ENCODE measurements at regions of chr1 and their contacts with region 1.

Region 1: GRCh38 chr1:167721617-167722151 is at the start of gene MPZL1:
- DNase-seq: peak; percentile 91 to 98 (median 94)
- H3K4me3 ChIP-seq: peak within 1 kb of the TSS; percentile 72 to 98 (median 90)
- H3K27ac ChIP-seq: peak within 1 kb of the TSS in 58 of 59 donors; percentile 40 to 94 (median 85)
- H3K27me3 ChIP-seq: peaks cover 0 to 6% (median 0%) of the 10 kb centered on the region in 45 donors
- CTCF ChIP-seq: peak in 24 of 56 donors; percentile 6 to 42 (median 18)
- total RNA-seq, gene MPZL1: 23.8 to 52.3 (median 34.9) TPM

Region 2: GRCh38 chr1:167584581-167584980 is 137.1 kb before region 1 on chr1:
- intact Hi-C with region 1: no loop called
- DNase-seq: no peak
- H3K4me3 ChIP-seq: no peak overlapping the region
- H3K27ac ChIP-seq: no peak overlapping the region
- H3K27me3 ChIP-seq: peaks cover 0 to 4% (median 0%) of the 10 kb centered on the region in 45 donors
- CTCF ChIP-seq: no peak

Region 3: GRCh38 chr1:167763525-167764220 is 42.0 kb after region 1 on chr1:
- intact Hi-C with region 1: loop called (anchors 2 kb)
- DNase-seq: peak in 6 of 10 donors; percentile 15 to 73 (median 48)
- H3K4me3 ChIP-seq: peak overlapping the region in 9 of 59 donors; percentile 1 to 35 (median 9)
- H3K27ac ChIP-seq: peak overlapping the region in 16 of 59 donors; percentile 0 to 63 (median 18)
- H3K27me3 ChIP-seq: peaks cover 0 to under 1% (median 0%) of the 10 kb centered on the region in 45 donors
- CTCF ChIP-seq: peak in 7 of 56 donors; percentile 7 to 29 (median 21)

Region 4: DNA sequence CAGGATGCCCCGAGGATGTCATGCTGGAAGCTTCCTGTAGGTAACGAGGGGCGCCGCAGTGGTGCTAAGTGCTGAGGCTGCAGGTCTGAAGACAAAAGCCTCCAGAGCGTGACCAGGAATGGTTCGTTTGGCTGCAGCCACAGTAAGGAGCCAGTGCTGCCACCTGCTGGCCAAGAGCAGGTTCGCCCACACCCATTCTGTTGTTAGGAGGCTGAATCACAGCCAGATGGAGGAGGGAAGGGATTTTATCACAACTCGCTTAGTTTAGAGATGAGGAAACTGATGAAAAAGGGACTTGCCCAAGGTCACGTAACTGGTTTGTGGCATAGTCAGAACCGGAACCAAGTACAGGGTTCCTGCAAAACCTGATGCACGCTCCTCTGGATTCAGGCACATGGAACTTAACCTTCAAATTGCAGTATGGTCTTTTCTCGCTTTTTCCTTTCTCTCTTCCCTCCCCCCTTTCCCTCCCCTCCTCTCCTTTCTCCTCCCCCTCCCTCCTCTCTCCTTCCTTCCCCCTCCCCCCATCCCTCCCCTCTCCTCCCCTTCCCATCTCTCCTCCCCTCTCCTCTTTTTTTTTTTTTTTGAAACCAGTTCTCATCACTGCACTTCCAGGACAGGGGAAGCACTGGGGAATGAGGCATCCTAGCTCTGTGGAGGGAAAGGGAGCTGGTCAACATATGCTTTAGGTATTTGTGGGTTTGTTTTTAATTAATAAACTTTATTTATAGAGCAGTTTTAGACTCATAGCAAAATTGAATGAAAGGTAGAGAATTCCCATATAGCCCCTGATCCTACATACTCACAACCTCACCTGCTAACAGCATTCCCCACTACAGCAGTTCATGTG is 81.9 kb after region 1 on chr1:
- intact Hi-C with region 1: loop called in 1 of 2 experiments (anchors 1 kb)
- DNase-seq: peak; percentile 77 to 92 (median 88)
- H3K4me3 ChIP-seq: peak overlapping the region in 16 of 59 donors; percentile 0 to 26 (median 14)
- H3K27ac ChIP-seq: peak overlapping the region in 3 of 59 donors; percentile 8 to 40 (median 30)
- H3K27me3 ChIP-seq: peaks cover 0 to 3% (median 0%) of the 10 kb centered on the region in 45 donors
- CTCF ChIP-seq: peak; percentile 89 to 99 (median 95)

Region 5: DNA sequence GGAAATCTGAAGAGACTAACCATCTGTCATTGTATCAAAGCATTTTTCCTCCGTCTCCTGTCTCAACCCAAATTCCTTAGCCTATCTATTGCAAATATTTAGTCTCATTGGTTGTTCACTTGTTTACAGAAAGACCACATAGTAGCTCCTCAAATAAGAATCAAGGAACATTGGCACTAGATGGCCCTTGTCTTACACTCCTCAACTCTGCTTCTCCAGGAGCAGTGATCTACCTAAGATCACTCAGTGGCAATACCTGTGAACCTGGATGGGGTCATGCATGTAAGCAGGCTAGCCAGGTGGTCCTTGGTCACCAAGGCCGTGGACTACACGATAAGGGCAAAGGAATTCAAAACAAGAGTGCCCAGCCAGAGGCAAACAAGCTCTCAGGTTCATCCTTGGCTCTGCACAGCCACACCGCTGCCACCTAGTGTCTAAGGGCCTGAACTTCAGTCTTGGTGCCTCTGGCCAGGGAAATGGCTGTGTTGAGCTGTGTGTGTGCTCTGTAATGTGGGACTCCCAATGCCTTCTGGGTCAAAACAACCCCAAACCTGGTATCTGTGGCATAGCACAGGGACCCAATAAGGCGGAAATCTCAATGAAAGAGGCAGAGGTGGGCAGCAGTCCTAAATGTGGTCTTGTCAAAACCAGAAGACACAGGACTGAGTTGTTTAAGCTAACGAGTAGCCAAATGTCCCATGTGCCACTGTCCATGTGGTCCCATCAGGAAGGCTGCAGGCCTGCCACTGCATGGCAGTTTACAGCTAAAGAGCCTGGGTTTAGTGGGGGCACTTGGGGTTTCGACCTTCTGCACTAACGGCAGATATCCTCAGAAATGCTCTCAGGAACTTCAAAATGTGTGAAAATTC is 360.6 kb after region 1 on chr1:
- intact Hi-C with region 1: loop called (anchors 5 to 10 kb)
- DNase-seq: peak; percentile 55 to 84 (median 77)
- H3K4me3 ChIP-seq: no peak overlapping the region
- H3K27ac ChIP-seq: peak overlapping the region in 45 of 59 donors; percentile 2 to 83 (median 44)
- H3K27me3 ChIP-seq: no peaks in the 10 kb centered on the region
- CTCF ChIP-seq: peak; percentile 57 to 91 (median 83)

Measured in dorsolateral prefrontal cortex (tissue), 120 donors.